HepG2 (cell line): ENCODE measurements at regions of chr9 and their contacts with region 1.

Region 1: GRCh38 chr9:109182940-109183798 is 16.1 kb upstream of the FRRS1L start:
- DNase-seq: peak; percentile 81
- ATAC-seq: peak; percentile 94
- H3K4me3 ChIP-seq: peak overlapping the region; percentile 31 to 70 (median 51)
- H3K27ac ChIP-seq: peak overlapping the region; percentile 19
- H3K4me1 ChIP-seq: peaks cover 44% of the 10 kb centered on the region
- H3K27me3 ChIP-seq: 0 out of 5 replicates have a peak, but pooled peaks cover 0 to 2% of the 10 kb centered on the region in 2 experiments
- CTCF ChIP-seq: peak; percentile 78
- EP300 ChIP-seq: no peak
- POLR2A ChIP-seq: no peak
- RAD21 ChIP-seq: peak; percentile 75

Region 2: DNA sequence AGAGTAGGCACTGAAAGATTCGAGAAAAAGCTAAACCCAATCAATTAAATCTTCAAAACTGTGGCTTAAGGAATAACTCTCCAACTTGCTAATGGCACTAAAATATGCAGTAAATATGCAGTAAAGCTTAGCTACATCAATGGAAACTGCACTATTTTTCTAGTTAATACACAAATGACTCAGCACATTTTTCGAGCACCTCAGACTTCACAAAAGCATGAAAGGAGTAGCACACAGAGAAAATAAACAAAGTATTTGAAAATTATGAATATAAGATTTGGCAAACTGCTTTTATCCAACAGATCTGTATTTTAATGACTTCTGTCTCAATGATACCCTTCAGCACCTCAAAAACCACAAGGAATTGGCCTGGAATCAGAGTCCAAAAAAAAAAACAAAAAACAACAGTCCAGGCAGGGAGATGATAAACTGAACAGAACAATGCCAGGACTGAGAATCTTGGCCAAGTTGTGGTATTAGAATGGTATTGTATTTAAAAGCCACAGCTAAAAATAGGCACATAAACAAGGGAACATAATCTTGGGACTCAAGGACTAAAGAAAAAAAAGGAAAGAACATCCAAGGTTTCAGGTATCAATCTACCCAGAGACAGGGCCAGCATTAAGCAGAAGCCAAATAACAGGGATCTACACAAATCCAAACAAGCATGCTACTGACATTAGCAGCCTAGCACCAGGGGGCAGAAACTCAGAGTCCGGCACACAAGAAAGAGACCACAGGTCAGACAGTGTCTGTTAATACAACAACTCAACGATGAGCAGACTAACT is 84.8 kb before region 1 on chr9:
- CTCF ChIA-PET with region 1: interaction called, 3 read pairs
- POLR2A ChIA-PET with region 1: no interaction called
- in situ Hi-C with region 1: no loop called
- intact Hi-C with region 1: loop called (anchors 5 kb)
- DNase-seq: peak; percentile 68
- ATAC-seq: peak; percentile 99
- H3K4me3 ChIP-seq: no peak overlapping the region
- H3K27ac ChIP-seq: peak overlapping the region; percentile 43
- H3K4me1 ChIP-seq: peaks cover 67% of the 10 kb centered on the region
- H3K27me3 ChIP-seq: no peaks in the 10 kb centered on the region
- CTCF ChIP-seq: peak; percentile 75
- EP300 ChIP-seq: no peak
- POLR2A ChIP-seq: no peak
- RAD21 ChIP-seq: peak; percentile 24; the same call in 1 of the 2 replicates

Region 3: DNA sequence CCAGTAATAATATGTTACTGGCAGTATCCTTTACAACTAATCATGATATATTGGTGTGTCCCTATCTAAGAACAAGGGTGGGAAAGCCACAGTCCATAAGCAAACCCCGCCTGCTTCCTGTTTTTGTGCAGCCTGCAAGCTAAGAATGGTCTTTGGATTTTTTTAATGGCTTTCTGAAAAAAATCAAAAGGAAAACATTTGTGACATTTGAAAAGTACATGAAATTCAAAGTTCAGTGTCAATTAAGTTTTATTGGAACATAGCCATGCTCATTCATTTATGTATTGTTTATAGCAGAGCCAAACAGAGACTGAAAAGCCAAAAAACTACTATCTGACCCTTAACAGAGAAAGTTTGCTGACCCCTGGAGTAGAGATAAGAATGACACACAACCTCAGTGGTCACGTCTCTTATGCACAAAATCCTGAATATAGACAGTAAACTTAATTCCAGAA is 50.6 kb before region 1 on chr9:
- CTCF ChIA-PET with region 1: no interaction called
- POLR2A ChIA-PET with region 1: no interaction called
- in situ Hi-C with region 1: no loop called
- intact Hi-C with region 1: loop called (anchors 2 kb)
- DNase-seq: peak; percentile 19
- ATAC-seq: peak; percentile 77
- H3K4me3 ChIP-seq: peak overlapping the region; percentile 50 to 60 (median 59); a peak in 5 of 6 replicates
- H3K27ac ChIP-seq: peak overlapping the region; percentile 69
- H3K4me1 ChIP-seq: peaks cover 61% of the 10 kb centered on the region
- H3K27me3 ChIP-seq: no peaks in the 10 kb centered on the region
- CTCF ChIP-seq: peak; percentile 53
- EP300 ChIP-seq: no peak
- POLR2A ChIP-seq: no peak
- RAD21 ChIP-seq: no peak

Region 4: GRCh38 chr9:109320742-109321448 is 137.7 kb after region 1 on chr9 and contains the start of gene EPB41L4B:
- CTCF ChIA-PET with region 1: interaction called, 14 read pairs
- POLR2A ChIA-PET with region 1: interaction called, 5 read pairs
- in situ Hi-C with region 1: no loop called
- intact Hi-C with region 1: loop called (anchors 2 kb)
- DNase-seq: peak; percentile 83
- ATAC-seq: peak; percentile 88
- H3K4me3 ChIP-seq: peak within 1 kb of the TSS; percentile 85 to 91 (median 90)
- H3K27ac ChIP-seq: peak within 1 kb of the TSS; percentile 52
- H3K4me1 ChIP-seq: peaks cover 44% of the 10 kb centered on the region
- H3K27me3 ChIP-seq: no peaks in the 10 kb centered on the region; a peak in 2 of 5 replicates
- CTCF ChIP-seq: peak; percentile 98
- EP300 ChIP-seq: peak in 1 of 2 experiments; percentile 53; a peak in 1 of 4 replicates
- POLR2A ChIP-seq: no peak
- RAD21 ChIP-seq: peak; percentile 100
- total RNA-seq, gene EPB41L4B: 22.1 and 25.7 TPM in 2 replicates

Region 5: GRCh38 chr9:109401168-109401989 is 218.2 kb after region 1 on chr9:
- CTCF ChIA-PET with region 1: interaction called, 9 read pairs
- POLR2A ChIA-PET with region 1: no interaction called
- in situ Hi-C with region 1: no loop called
- intact Hi-C with region 1: loop called (anchors 2 kb)
- DNase-seq: peak; percentile 65
- ATAC-seq: peak; percentile 100
- H3K4me3 ChIP-seq: no peak overlapping the region
- H3K27ac ChIP-seq: no peak overlapping the region
- H3K4me1 ChIP-seq: no peaks in the 10 kb centered on the region
- H3K27me3 ChIP-seq: no peaks in the 10 kb centered on the region
- CTCF ChIP-seq: peak; percentile 86
- EP300 ChIP-seq: no peak
- POLR2A ChIP-seq: no peak
- RAD21 ChIP-seq: peak; percentile 70